OCI-LY7 (cell line): ENCODE measurements at regions of chr2 and their contacts with region 1.

Region 1: DNA sequence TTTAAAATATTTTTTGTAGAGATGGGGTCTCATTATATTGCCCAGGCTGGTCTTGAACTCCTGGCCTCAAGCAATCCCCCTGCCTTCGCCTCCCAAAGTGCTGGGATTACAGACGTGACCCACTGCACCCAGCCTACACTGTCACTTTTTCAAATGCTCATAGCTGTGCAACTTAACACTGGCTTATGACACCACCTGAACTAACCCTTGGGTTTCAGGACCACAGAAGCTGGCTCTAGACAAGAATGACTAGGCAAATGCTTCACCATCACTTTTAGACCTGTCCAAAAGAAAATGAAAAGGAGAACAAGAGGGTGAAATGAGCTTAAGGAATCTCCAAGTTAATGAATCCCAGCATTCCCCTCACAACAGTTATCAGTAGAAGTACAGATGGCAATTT is 13.3 kb downstream of the ERCC3 start:
- DNase-seq: no peak
- H3K4me3 ChIP-seq: no peak overlapping the region
- H3K27ac ChIP-seq: no peak overlapping the region
- H3K4me1 ChIP-seq: no peaks in the 10 kb centered on the region
- CTCF ChIP-seq: no peak

Region 2: DNA sequence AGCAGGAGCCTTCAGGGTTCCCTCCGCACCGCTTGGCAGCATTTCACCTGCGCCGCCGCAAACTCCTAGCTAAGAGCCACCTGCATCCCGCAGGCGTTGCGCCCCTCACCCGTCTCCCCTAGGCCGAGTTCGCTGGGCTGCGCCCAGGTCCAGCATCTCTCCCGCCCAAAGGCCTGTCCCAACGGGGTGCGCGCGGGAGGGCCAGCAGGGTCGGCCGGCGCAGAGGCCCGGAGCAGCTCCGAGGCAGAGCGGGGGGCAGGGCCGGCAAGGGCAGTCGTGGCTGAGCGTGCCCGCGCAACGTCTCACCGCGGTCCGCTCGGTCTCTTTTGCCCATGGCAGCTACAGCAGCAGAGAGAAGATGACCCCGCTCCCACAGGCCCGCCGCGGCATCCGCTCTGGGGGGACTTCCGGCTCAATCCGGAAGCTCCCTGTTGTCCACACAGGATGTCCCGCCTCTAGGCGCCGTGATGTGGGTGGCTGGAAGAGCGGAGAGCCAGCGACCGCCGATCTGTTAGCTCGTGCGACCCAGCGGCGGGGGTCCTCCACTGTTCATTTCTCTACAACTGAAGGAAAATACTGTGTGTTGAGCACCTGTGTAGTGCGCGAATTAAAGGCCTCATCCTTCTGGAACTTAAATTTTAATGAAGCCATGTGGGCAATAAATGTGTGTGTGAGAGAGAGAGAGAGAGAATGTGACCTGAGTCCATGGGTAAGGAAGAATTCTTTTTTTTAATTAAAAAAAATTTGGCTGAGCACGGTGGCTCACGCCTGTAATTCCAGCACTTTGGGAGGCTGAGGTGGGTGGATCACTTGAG is 13.3 kb after region 1 on chr2 and contains the start of gene ERCC3:
- CTCF ChIA-PET with region 1: no interaction called
- POLR2A ChIA-PET with region 1: interaction called, 16 read pairs
- intact Hi-C with region 1: no loop called
- DNase-seq: peak; percentile 93
- H3K4me3 ChIP-seq: peak within 1 kb of the TSS; percentile 87
- H3K27ac ChIP-seq: peak within 1 kb of the TSS; percentile 50
- H3K4me1 ChIP-seq: peaks cover 13% of the 10 kb centered on the region
- CTCF ChIP-seq: no peak
- total RNA-seq, gene ERCC3: 35.1 and 41.9 TPM in 2 replicates